Calu3 (cell line): ENCODE measurements at regions of chr17 and their contacts with region 1.

Region 1: DNA sequence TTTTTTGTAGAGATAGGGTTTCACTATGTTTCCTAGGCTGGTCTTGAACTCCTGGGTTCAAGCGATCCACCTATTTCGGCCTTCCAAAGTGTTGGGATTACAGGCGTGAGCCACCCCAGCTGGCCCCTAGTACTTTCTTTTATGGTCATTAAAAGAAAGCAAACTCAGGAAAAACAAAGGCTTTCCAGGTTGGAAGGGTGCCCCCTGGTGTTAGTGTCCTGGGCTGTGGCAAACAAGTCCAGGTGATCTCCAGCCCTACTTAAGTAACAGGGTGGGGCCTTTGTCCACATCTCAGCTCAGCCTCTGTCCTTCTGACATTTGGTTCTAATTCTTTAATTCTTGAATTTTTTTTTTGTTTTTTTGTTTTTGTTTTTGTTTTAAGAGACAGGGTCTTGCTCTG is 6.9 kb downstream of the IGFBP4 start:
- DNase-seq: peak; percentile 100
- H3K4me3 Mint-ChIP-seq: no peak overlapping the region
- H3K27ac Mint-ChIP-seq: no peak overlapping the region
- H3K4me1 Mint-ChIP-seq: peaks cover 48% of the 10 kb centered on the region
- H3K27me3 Mint-ChIP-seq: peaks cover 17% of the 10 kb centered on the region
- CTCF ChIP-seq: no peak

Region 2: GRCh38 chr17:40209404-40210093 is 240.6 kb before region 1 on chr17:
- CTCF ChIA-PET with region 1: interaction called, 17 read pairs
- intact Hi-C with region 1: loop called (anchors 2 kb)
- DNase-seq: no peak
- H3K4me3 Mint-ChIP-seq: no peak overlapping the region
- H3K27ac Mint-ChIP-seq: no peak overlapping the region
- H3K4me1 Mint-ChIP-seq: no peaks in the 10 kb centered on the region
- H3K27me3 Mint-ChIP-seq: no peaks in the 10 kb centered on the region
- CTCF ChIP-seq: no peak

Region 3: GRCh38 chr17:40331743-40332641 is 118.2 kb before region 1 on chr17:
- CTCF ChIA-PET with region 1: no interaction called
- intact Hi-C with region 1: no loop called
- DNase-seq: peak; percentile 87
- H3K4me3 Mint-ChIP-seq: peak overlapping the region; percentile 15
- H3K27ac Mint-ChIP-seq: peak overlapping the region; percentile 3
- H3K4me1 Mint-ChIP-seq: peaks cover 71% of the 10 kb centered on the region
- H3K27me3 Mint-ChIP-seq: no peaks in the 10 kb centered on the region
- CTCF ChIP-seq: peak; percentile 47

Region 4: GRCh38 chr17:40345161-40345993 is 104.8 kb before region 1 on chr17:
- CTCF ChIA-PET with region 1: no interaction called
- intact Hi-C with region 1: no loop called
- DNase-seq: peak; percentile 99
- H3K4me3 Mint-ChIP-seq: peak overlapping the region; percentile 89
- H3K27ac Mint-ChIP-seq: peak overlapping the region; percentile 75
- H3K4me1 Mint-ChIP-seq: peaks cover 85% of the 10 kb centered on the region
- H3K27me3 Mint-ChIP-seq: no peaks in the 10 kb centered on the region
- CTCF ChIP-seq: no peak

Region 5: DNA sequence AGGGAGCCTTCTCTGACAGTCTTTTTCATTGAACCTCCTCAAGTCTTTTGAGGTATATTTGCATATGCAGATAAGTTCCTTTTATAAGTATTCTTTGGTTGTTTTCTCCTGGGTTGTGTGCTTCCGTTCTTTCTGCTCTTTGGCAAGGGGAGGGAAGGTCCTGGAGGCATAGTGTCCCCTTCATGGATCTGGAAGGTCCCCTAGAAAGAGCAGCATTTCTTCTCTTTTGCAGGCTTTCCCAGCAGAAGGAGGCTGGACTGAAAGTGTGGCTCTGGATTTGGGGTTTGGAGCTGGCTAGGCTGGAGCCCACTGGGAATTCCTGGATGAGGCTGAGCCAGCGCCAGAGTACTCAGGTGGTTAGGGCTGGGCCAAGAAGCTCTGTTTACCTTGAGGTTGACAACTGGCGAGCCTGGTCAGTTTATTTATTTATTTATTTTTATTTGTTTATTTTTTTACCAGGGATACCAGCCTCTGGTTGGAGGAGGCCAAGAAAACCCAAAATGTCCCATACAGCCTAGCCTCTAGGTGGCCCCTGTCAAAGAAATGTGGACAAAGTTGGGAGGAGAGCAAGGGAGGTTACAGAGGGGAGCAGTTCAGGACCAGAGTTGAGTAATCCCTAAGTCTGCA is 27.1 kb before region 1 on chr17:
- CTCF ChIA-PET with region 1: interaction called, 115 read pairs
- intact Hi-C with region 1: no loop called
- DNase-seq: peak; percentile 73
- H3K4me3 Mint-ChIP-seq: no peak overlapping the region
- H3K27ac Mint-ChIP-seq: no peak overlapping the region
- H3K4me1 Mint-ChIP-seq: peaks cover 20% of the 10 kb centered on the region
- H3K27me3 Mint-ChIP-seq: peaks cover 24% of the 10 kb centered on the region
- CTCF ChIP-seq: no peak

Region 6: DNA sequence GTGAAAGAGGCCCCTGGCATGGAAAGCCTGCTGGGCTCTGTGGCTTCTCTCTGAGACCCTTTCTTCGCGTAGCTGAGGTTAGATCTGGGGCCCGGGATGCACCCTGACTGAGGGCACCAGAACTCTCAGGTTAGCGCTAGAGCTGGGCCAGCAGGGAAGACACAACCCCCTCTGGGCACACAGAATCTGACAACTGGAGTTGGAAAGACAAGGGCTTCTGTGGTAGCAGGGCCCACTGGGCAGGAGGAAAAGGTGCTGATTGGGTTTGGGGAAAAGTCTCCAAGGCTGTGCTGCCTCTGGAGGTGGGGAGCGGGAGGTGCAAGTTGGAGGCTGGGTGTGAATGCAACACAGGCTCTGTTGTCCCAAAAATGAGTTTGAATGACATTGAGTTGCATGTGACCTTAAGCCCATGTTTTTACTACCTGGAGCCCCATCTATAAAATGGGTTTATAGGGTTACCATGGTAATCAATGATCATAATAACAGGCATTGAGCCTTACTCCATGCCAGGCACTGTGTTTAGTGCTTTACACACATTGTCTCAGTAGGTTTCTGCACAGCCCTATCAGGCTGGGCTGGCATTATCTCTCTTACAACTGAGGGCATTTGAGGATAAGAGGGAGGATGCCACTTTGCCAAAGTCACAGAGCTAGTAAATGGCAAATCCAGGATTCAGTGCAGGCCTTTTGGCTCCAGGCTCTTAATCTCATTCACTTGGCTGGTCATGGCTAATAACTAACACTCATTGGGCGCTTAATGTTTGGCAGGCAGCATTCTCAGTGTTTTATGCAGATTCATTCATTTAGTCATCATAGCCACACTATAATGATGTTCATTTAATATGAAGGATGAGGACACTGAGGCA is 16.4 kb before region 1 on chr17:
- CTCF ChIA-PET with region 1: interaction called, 392 read pairs
- intact Hi-C with region 1: loop called (anchors 2 kb)
- DNase-seq: peak; percentile 94
- H3K4me3 Mint-ChIP-seq: no peak overlapping the region
- H3K27ac Mint-ChIP-seq: no peak overlapping the region
- H3K4me1 Mint-ChIP-seq: no peaks in the 10 kb centered on the region
- H3K27me3 Mint-ChIP-seq: peaks cover 43% of the 10 kb centered on the region
- CTCF ChIP-seq: no peak

Region 7: DNA sequence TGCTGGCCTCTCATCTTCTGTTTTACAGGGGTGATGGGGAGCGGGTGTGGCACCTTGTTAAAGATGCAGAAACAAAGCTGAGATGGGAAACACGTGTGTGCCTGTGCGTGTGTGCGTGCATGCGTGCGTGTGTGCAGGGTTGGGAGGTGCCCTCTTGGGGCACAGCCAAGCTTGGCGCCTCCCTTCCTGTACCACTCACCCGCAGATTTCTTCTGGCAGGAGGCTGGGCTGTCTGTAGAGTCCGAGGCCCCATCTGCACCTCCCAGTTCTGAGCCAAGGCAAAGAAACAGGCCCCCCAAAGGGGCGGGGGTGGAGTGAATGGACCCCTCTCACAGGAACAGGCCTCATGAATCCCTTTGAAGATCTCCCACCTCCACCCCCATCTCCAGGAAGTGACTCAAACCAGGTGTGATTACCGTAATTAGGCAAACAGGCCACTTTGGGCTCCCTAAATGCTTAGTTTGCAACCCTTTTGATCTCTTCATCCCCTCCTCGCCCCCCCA is 30.4 kb after region 1 on chr17:
- CTCF ChIA-PET with region 1: interaction called, 1,658 read pairs
- intact Hi-C with region 1: loop called (anchors 2 kb)
- DNase-seq: peak; percentile 91
- H3K4me3 Mint-ChIP-seq: no peak overlapping the region
- H3K27ac Mint-ChIP-seq: no peak overlapping the region
- H3K4me1 Mint-ChIP-seq: peaks cover 25% of the 10 kb centered on the region
- H3K27me3 Mint-ChIP-seq: peaks cover 36% of the 10 kb centered on the region
- CTCF ChIP-seq: no peak

Region 8: GRCh38 chr17:40516581-40517285 is 66.6 kb after region 1 on chr17:
- CTCF ChIA-PET with region 1: interaction called, 4,142 read pairs
- intact Hi-C with region 1: loop called (anchors 2 kb)
- DNase-seq: peak; percentile 94
- H3K4me3 Mint-ChIP-seq: no peak overlapping the region
- H3K27ac Mint-ChIP-seq: peak overlapping the region; percentile 1
- H3K4me1 Mint-ChIP-seq: peaks cover 65% of the 10 kb centered on the region
- H3K27me3 Mint-ChIP-seq: peaks cover 26% of the 10 kb centered on the region
- CTCF ChIP-seq: no peak